ENCODE measurements at regions of chr11 and their contacts with region 1.

Region 1: GRCh38 chr11:1309498-1310317 is at the start of gene TOLLIP:
- DNase-seq: peak; percentile 96 to 100 (median 98)
- H3K4me3 ChIP-seq: peak within 1 kb of the TSS; percentile 43 to 63
- H3K4me3 Mint-ChIP-seq: peak within 1 kb of the TSS; percentile 86 to 91 (median 89)
- H3K27ac ChIP-seq: peak within 1 kb of the TSS; percentile 83
- H3K27ac Mint-ChIP-seq: peak within 1 kb of the TSS; percentile 74 to 98 (median 96)
- H3K4me1 ChIP-seq: peaks cover 45% of the 10 kb centered on the region
- H3K4me1 Mint-ChIP-seq: peaks cover 17 to 55% (median 34%) of the 10 kb centered on the region in 4 donors
- H3K27me3 ChIP-seq: no peaks in the 10 kb centered on the region
- H3K27me3 Mint-ChIP-seq: no peaks in the 10 kb centered on the region
- total RNA-seq, gene TOLLIP: 49.3 to 51.4 TPM

Region 2: GRCh38 chr11:1262172-1263006 is 47.3 kb before region 1 on chr11:
- CTCF ChIA-PET with region 1: interaction called, 4 read pairs
- POLR2A ChIA-PET with region 1: interaction called, 34 read pairs
- intact Hi-C with region 1: loop called (anchors 1 kb)
- DNase-seq: peak; percentile 86 to 89 (median 87)
- H3K4me3 ChIP-seq: peak overlapping the region; percentile 65 to 71
- H3K4me3 Mint-ChIP-seq: peak overlapping the region; percentile 79 to 93 (median 86)
- H3K27ac ChIP-seq: peak overlapping the region; percentile 77
- H3K27ac Mint-ChIP-seq: peak overlapping the region; percentile 67 to 97 (median 92)
- H3K4me1 ChIP-seq: peaks cover 17% of the 10 kb centered on the region
- H3K4me1 Mint-ChIP-seq: peaks cover 7 to 23% (median 12%) of the 10 kb centered on the region in 4 donors
- H3K27me3 ChIP-seq: no peaks in the 10 kb centered on the region
- H3K27me3 Mint-ChIP-seq: no peaks in the 10 kb centered on the region

Region 3: DNA sequence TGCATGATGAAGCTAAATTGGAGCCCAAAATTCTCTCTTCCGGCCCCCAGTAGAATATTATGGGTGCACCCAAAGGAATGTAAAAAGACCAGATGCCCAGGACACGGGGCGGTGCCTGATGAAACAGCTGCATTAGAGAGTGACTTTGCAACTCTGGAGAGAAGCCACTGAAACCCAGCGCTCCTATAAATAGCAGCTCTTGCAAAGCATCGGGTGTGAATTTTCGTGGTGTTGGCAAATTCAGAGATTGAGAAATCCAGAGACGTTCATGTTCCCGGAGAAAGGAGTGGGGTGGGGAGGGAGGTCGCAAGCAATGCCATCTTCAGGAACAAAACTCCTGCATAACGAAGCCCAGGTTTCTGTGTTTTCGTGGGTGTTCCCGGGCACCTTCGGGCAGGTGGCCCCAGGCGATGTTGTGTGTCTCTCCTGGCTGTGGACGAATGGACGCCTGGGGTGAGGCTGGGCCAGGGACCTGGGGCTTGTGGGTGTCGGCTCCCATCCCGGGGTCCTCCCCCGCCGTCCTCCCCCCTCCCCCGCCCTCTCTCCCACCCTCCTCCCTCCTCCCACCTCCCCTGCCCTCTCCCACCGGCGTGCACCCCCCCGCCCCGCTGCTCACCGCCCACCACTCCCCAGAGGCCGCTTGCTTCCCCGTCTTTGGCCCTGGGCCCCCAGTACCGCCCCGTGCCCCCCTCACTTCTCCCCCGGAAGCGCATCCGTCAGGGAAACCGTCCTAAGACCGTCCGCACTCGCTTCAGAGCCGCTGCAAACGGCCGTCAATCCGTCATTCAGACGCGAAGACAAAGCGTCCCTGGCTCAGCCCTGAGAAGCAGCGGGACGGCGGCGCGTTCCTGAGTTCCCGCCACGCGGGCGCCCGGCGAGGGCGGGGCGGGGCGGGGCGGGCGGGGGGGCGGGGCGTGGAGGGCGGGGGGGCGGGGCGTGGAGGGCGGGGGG is 26.4 kb after region 1 on chr11:
- CTCF ChIA-PET with region 1: no interaction called
- POLR2A ChIA-PET with region 1: interaction called, 15 read pairs
- intact Hi-C with region 1: loop called (anchors 1 kb)
- DNase-seq: peak; percentile 44 to 75 (median 55)
- H3K4me3 ChIP-seq: peak overlapping the region; percentile 38 to 39
- H3K4me3 Mint-ChIP-seq: peak overlapping the region; percentile 71 to 89 (median 80)
- H3K27ac ChIP-seq: peak overlapping the region; percentile 27
- H3K27ac Mint-ChIP-seq: peak overlapping the region; percentile 49 to 92 (median 79)
- H3K4me1 ChIP-seq: peaks cover 12% of the 10 kb centered on the region
- H3K4me1 Mint-ChIP-seq: peaks cover 9 to 12% (median 11%) of the 10 kb centered on the region in 4 donors
- H3K27me3 ChIP-seq: no peaks in the 10 kb centered on the region
- H3K27me3 Mint-ChIP-seq: peaks cover 0 to 3% of the 10 kb centered on the region in 2 donors

Region 4: GRCh38 chr11:1382831-1383607 is 73.3 kb after region 1 on chr11:
- CTCF ChIA-PET with region 1: no interaction called
- POLR2A ChIA-PET with region 1: interaction called, 21 read pairs
- intact Hi-C with region 1: no loop called
- DNase-seq: peak; percentile 72 to 86 (median 74)
- H3K4me3 ChIP-seq: peak overlapping the region in 1 of 2 donors; percentile 57
- H3K4me3 Mint-ChIP-seq: peak overlapping the region; percentile 77 to 90 (median 82)
- H3K27ac ChIP-seq: peak overlapping the region; percentile 79
- H3K27ac Mint-ChIP-seq: peak overlapping the region; percentile 87 to 94 (median 92)
- H3K4me1 ChIP-seq: no peaks in the 10 kb centered on the region
- H3K4me1 Mint-ChIP-seq: peaks cover 2 to 47% (median 10%) of the 10 kb centered on the region in 4 donors
- H3K27me3 ChIP-seq: no peaks in the 10 kb centered on the region
- H3K27me3 Mint-ChIP-seq: no peaks in the 10 kb centered on the region

Region 5: DNA sequence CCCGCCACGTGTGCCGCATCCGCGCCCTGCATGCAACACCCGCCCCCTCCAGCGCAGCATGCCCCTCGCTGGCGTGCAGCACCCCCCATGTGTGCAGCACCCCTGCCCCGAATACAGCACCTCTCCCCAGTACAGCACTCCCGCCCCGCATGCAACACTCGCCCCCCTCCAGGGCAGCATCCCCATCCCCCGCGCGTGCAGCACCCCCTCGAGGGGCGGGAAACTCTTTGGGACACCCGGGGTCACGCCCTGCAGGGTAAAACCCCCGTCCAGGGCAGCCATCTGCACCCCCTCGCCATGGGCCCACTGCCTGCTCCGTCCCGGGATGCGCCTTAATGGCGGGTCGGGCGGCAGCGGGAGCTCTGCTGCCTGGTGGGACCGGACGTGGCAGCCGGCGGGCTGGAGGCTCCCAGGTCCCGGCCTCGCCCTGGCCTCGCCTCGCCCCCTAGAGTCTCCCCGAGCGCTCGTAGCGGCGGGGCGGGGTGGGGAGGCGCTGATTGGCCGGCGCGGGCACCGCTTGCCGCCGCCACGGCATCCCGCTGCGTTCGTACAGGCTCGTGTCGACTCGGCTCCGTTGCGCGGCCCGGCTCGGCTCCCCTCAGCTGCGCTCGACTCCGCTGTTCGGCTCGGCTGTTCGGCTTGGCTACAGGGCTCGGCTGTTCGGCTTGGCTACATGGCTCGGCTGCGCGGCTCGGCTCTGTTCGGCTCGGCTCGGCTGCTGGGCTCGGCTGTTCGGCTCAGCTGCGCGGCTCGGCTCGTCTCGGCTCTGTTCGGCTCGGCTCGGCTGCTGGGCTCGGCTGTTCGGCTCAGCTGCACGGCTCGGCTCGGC is 79.6 kb after region 1 on chr11:
- CTCF ChIA-PET with region 1: no interaction called
- POLR2A ChIA-PET with region 1: interaction called, 21 read pairs
- intact Hi-C with region 1: loop called (anchors 1 kb)
- DNase-seq: peak; percentile 97 to 98 (median 98)
- H3K4me3 ChIP-seq: peak overlapping the region in 1 of 2 donors; percentile 58
- H3K4me3 Mint-ChIP-seq: peak overlapping the region; percentile 61 to 86 (median 80)
- H3K27ac ChIP-seq: peak overlapping the region; percentile 61
- H3K27ac Mint-ChIP-seq: peak overlapping the region in 4 of 7 donors; percentile 18 to 59 (median 46)
- H3K4me1 ChIP-seq: peaks cover 9% of the 10 kb centered on the region
- H3K4me1 Mint-ChIP-seq: peaks cover 6 to 29% (median 12%) of the 10 kb centered on the region in 4 donors
- H3K27me3 ChIP-seq: peaks cover 8% of the 10 kb centered on the region
- H3K27me3 Mint-ChIP-seq: peaks cover 13 to 20% of the 10 kb centered on the region in 2 donors